ENCODE measurements at regions of chr18 and their contacts with region 1.

Region 1: DNA sequence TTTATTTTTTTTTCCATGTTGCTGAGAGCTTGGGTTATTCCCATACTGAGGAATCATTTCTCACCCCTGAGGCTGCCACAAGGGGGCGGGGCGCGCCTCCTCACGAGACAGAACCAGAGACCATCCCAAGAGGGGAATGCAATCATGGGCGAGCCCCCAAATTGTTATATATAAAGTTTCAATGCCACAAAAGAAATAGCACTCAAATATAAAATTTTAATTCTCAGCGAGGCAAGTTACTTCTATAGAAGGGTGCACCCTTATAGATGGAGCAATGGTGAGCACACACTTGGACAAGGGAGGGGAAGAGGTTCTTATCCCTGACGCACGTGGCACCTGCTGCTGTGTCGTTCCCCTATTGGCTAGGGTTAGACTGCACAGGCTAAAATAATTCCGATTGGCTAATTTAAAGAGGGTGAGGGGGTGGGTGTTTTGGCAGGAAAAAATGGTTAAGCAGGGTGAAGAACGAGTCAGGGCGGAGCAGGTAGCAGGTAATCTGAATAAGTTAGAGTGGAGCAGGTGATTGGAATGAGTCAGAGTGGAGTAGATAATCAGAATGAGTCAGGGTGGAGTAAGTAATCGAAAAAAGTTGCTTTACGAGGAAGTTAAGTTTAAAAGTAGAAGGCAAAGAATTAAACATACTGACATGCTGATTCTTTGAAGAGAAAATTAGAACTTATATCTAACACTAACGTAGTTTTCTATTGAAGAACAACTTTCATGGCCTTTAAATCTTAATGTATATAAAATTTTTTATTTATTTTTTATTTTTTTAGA is 177.5 kb downstream of the MTCL1 start:
- DNase-seq: no peak
- H3K4me3 ChIP-seq: no peak overlapping the region
- H3K27ac ChIP-seq: no peak overlapping the region
- H3K4me1 ChIP-seq: no peaks in the 10 kb centered on the region
- H3K27me3 ChIP-seq: no peaks in the 10 kb centered on the region
- CTCF ChIP-seq: no peak

Region 2: GRCh38 chr18:7755753-7756475 is 1126.9 kb before region 1 on chr18:
- intact Hi-C with region 1: loop called (anchors 10 kb)
- DNase-seq: no peak
- H3K4me3 ChIP-seq: no peak overlapping the region
- H3K27ac ChIP-seq: no peak overlapping the region
- H3K4me1 ChIP-seq: peaks cover 0 to 46% (median 4%) of the 10 kb centered on the region in 4 donors
- H3K27me3 ChIP-seq: no peaks in the 10 kb centered on the region
- CTCF ChIP-seq: peak; percentile 27 to 33

Region 3: DNA sequence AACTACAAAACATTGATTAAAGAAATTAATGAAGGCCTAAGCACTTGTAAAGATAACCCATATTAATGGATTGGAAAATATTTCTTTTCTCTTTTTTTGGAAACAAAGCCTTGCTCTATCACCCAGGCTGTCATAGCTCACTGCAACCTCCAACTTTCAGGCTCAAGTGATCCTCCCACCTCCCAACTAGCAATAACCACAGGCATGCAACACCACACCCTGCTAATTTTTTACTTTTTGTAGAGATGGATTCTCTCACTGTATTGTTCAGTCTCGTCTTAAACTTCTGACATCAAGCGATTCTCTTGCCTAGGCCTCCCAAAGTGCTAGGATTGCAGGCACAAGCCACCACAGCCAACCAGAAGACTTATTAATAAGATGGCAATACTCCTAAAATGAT is 146.3 kb after region 1 on chr18:
- intact Hi-C with region 1: no loop called
- DNase-seq: no peak
- H3K4me3 ChIP-seq: no peak overlapping the region
- H3K27ac ChIP-seq: no peak overlapping the region
- H3K4me1 ChIP-seq: no peaks in the 10 kb centered on the region
- H3K27me3 ChIP-seq: no peaks in the 10 kb centered on the region
- CTCF ChIP-seq: no peak

Region 4: GRCh38 chr18:9209279-9209678 is 326.5 kb after region 1 on chr18:
- intact Hi-C with region 1: no loop called
- DNase-seq: no peak
- H3K4me3 ChIP-seq: no peak overlapping the region
- H3K27ac ChIP-seq: no peak overlapping the region
- H3K4me1 ChIP-seq: peaks cover 0 to 10% (median 2%) of the 10 kb centered on the region in 4 donors
- H3K27me3 ChIP-seq: no peaks in the 10 kb centered on the region
- CTCF ChIP-seq: no peak

Measured in tibial artery (tissue), 4 donors.